GM12878 (cell line): ENCODE measurements at regions of chr20 and their contacts with region 1.

Region 1: GRCh38 chr20:53957451-53958172 is 112.8 kb downstream of the BCAS1 start:
- DNase-seq: no peak
- ATAC-seq: 0 out of 3 replicates have a peak, but pooled peaks have one; percentile 31
- H3K4me3 ChIP-seq: no peak overlapping the region
- H3K27ac ChIP-seq: no peak overlapping the region
- H3K4me1 ChIP-seq: no peaks in the 10 kb centered on the region
- H3K27me3 ChIP-seq: no peaks in the 10 kb centered on the region; a peak in 1 of 4 replicates
- CTCF ChIP-seq: peak in 2 of 3 experiments; percentile 4 to 20; a peak in 1 of 6 replicates
- EP300 ChIP-seq: no peak
- POLR2A ChIP-seq: no peak
- RAD21 ChIP-seq: peak; percentile 23; the same call in 1 of the 2 replicates

Region 2: GRCh38 chr20:53157443-53158408 is 799.9 kb before region 1 on chr20:
- CTCF ChIA-PET with region 1: no interaction called
- POLR2A ChIA-PET with region 1: no interaction called
- RAD21 ChIA-PET with region 1: no interaction called
- SMC1A ChIA-PET with region 1: no interaction called
- in situ Hi-C with region 1: no loop called
- intact Hi-C with region 1: loop called (anchors 5 kb)
- DNase-seq: no peak
- ATAC-seq: peak; percentile 86
- H3K4me3 ChIP-seq: no peak overlapping the region
- H3K27ac ChIP-seq: peak overlapping the region; percentile 62; the same call in 1 of the 2 replicates
- H3K4me1 ChIP-seq: peaks cover 16% of the 10 kb centered on the region
- H3K27me3 ChIP-seq: no peaks in the 10 kb centered on the region
- CTCF ChIP-seq: peak; percentile 11 to 55 (median 53); a peak in 4 of 6 replicates
- EP300 ChIP-seq: no peak
- POLR2A ChIP-seq: no peak
- RAD21 ChIP-seq: peak; percentile 21; the same call in 1 of the 2 replicates

Region 3: DNA sequence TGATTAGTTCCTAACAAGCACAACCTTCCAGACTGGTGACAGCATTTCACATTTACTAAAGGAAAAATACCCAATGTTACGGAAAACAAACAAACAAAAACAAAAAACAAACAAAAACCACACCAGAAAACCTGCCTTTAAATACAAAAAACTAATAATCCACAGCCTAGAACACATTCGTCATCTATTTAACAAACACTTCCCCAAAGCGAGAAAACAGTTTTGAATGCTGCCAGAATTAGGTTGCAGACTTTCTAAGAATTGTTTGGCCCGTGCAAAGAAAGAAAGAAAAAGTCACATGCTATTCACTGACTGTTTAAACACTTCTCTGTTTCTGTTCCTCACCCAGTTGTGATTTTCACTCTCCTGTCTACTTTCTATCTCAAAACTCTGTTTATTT is 60.2 kb after region 1 on chr20:
- CTCF ChIA-PET with region 1: interaction called, 4 read pairs
- POLR2A ChIA-PET with region 1: no interaction called
- RAD21 ChIA-PET with region 1: interaction called, 3 read pairs
- SMC1A ChIA-PET with region 1: no interaction called
- in situ Hi-C with region 1: no loop called
- intact Hi-C with region 1: loop called (anchors 5 kb)
- DNase-seq: peak; percentile 88
- ATAC-seq: peak; percentile 96
- H3K4me3 ChIP-seq: peak overlapping the region; percentile 0; the same call in 1 of the 2 replicates
- H3K27ac ChIP-seq: peak overlapping the region; percentile 91
- H3K4me1 ChIP-seq: peaks cover 30% of the 10 kb centered on the region
- H3K27me3 ChIP-seq: no peaks in the 10 kb centered on the region
- CTCF ChIP-seq: no peak
- EP300 ChIP-seq: peak; percentile 89 to 93
- POLR2A ChIP-seq: no peak
- RAD21 ChIP-seq: no peak